ENCODE measurements at regions of chr2 and their contacts with region 1.

Region 1: DNA sequence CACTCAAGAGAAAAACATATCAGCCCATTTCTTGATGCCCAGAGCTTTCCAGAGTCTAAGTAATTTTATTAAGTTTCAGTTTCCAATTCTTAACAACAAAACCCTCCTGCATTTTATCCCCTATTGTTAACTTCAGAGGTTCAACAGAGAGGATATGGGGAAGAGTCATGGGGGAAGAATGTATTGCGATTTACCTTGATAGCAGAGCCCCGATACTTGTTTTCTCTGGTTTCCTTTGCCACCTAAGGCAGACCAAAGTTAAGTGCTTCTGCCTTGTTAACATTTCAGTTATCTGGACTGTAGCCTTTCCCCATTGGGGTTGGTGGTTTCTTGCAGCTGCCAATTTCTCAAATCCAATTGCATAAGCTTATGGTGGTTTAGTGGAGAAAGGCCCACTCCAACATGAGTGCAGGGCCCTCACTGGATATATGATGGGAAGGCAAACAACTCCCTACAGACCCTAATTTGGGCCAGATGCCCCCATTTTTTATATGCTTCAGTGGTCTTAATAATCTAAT is 82.0 kb upstream of the ITGB6 start:
- DNase-seq: no peak
- H3K4me3 ChIP-seq: no peak overlapping the region
- H3K4me3 Mint-ChIP-seq: no peak overlapping the region
- H3K27ac ChIP-seq: no peak overlapping the region
- H3K27ac Mint-ChIP-seq: peak overlapping the region in 5 of 7 donors; percentile 6 to 66 (median 61)
- H3K4me1 ChIP-seq: peaks cover 14% of the 10 kb centered on the region
- H3K4me1 Mint-ChIP-seq: peaks cover 15 to 49% (median 29%) of the 10 kb centered on the region in 4 donors
- H3K27me3 ChIP-seq: no peaks in the 10 kb centered on the region
- H3K27me3 Mint-ChIP-seq: no peaks in the 10 kb centered on the region

Region 2: GRCh38 chr2:159744363-159744762 is 537.8 kb before region 1 on chr2:
- CTCF ChIA-PET with region 1: no interaction called
- POLR2A ChIA-PET with region 1: no interaction called
- intact Hi-C with region 1: no loop called
- DNase-seq: no peak
- H3K4me3 ChIP-seq: no peak overlapping the region
- H3K4me3 Mint-ChIP-seq: no peak overlapping the region
- H3K27ac ChIP-seq: no peak overlapping the region
- H3K27ac Mint-ChIP-seq: peak overlapping the region in 1 of 7 donors; percentile 57
- H3K4me1 ChIP-seq: peaks cover 11% of the 10 kb centered on the region
- H3K4me1 Mint-ChIP-seq: peaks cover 18 to 26% (median 21%) of the 10 kb centered on the region in 4 donors
- H3K27me3 ChIP-seq: no peaks in the 10 kb centered on the region
- H3K27me3 Mint-ChIP-seq: no peaks in the 10 kb centered on the region

Region 3: DNA sequence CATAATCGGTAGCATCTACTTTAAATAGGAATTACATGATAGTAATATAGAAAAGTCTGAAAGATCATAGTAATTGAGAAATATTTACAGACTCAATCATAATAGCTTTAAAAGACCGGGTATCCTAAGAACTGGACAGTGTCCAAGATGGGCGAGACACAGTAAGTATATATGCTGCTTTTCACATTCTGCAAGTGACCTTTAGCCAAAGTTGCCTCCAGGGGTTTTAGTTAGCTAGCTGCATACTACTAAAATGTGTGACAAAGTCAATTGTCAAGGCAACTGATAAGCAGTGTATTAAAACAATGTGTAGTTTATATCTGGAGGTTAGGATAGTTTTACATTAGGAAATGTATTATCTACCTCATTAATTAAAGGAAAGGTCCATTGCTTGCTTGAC is 508.7 kb before region 1 on chr2:
- CTCF ChIA-PET with region 1: no interaction called
- POLR2A ChIA-PET with region 1: no interaction called
- intact Hi-C with region 1: no loop called
- DNase-seq: no peak
- H3K4me3 ChIP-seq: no peak overlapping the region
- H3K4me3 Mint-ChIP-seq: no peak overlapping the region
- H3K27ac ChIP-seq: no peak overlapping the region
- H3K27ac Mint-ChIP-seq: no peak overlapping the region
- H3K4me1 ChIP-seq: no peaks in the 10 kb centered on the region
- H3K4me1 Mint-ChIP-seq: no peaks in the 10 kb centered on the region
- H3K27me3 ChIP-seq: no peaks in the 10 kb centered on the region
- H3K27me3 Mint-ChIP-seq: no peaks in the 10 kb centered on the region

Region 4: DNA sequence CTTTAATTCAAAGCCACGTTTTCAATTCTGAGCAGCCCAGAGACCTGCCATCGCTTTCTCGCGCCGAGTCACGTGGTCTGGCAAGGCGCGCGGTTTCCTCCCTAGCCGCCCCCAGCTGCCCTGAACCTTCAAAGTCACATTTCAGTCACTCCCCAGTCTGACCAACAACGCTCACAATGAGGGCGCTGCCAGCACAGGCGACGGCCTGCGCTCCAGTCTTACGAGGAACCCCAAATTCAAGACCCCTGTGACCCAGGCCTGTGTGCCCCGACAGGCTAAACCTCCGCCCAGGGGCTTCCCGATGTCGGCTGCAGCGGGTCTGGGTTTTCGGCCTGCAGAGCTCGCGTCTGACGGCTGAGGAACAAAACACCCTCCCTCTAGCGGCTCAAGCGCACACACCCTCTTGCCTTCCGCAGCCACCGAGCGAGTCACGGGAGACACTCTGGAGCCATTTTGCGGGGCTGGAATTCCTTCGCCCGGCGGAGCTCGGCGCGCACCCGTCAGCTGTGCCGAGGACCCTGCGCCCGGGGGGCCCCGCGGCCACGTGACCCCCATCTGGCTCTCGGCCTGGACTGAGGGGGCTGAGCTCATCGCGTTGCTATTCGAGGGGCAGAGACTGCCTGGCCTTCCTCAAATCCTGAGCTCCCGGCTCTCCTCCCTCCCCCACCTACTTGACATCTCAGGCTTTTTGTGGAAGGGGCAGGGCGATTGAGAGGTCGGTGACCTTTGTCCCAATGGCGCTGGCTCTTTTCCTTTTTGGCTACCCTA is 12.1 kb before region 1 on chr2:
- CTCF ChIA-PET with region 1: interaction called, 10 read pairs
- POLR2A ChIA-PET with region 1: interaction called, 7 read pairs
- intact Hi-C with region 1: no loop called
- DNase-seq: peak; percentile 64 to 75 (median 69)
- H3K4me3 ChIP-seq: peak overlapping the region; percentile 30 to 59
- H3K4me3 Mint-ChIP-seq: peak overlapping the region; percentile 81 to 90 (median 87)
- H3K27ac ChIP-seq: peak overlapping the region; percentile 64
- H3K27ac Mint-ChIP-seq: peak overlapping the region; percentile 91 to 97 (median 94)
- H3K4me1 ChIP-seq: peaks cover 29% of the 10 kb centered on the region
- H3K4me1 Mint-ChIP-seq: peaks cover 20 to 48% (median 32%) of the 10 kb centered on the region in 4 donors
- H3K27me3 ChIP-seq: no peaks in the 10 kb centered on the region
- H3K27me3 Mint-ChIP-seq: no peaks in the 10 kb centered on the region

Region 5: GRCh38 chr2:160703648-160704585 is 421.8 kb after region 1 on chr2:
- CTCF ChIA-PET with region 1: no interaction called
- POLR2A ChIA-PET with region 1: no interaction called
- intact Hi-C with region 1: no loop called
- DNase-seq: peak in 4 of 5 donors; percentile 15 to 28 (median 19)
- H3K4me3 ChIP-seq: no peak overlapping the region
- H3K4me3 Mint-ChIP-seq: peak overlapping the region in 5 of 8 donors; percentile 22 to 77 (median 40)
- H3K27ac ChIP-seq: no peak overlapping the region
- H3K27ac Mint-ChIP-seq: peak overlapping the region in 3 of 7 donors; percentile 35 to 70 (median 43)
- H3K4me1 ChIP-seq: peaks cover 10% of the 10 kb centered on the region
- H3K4me1 Mint-ChIP-seq: peaks cover 9 to 14% (median 9%) of the 10 kb centered on the region in 4 donors
- H3K27me3 ChIP-seq: no peaks in the 10 kb centered on the region
- H3K27me3 Mint-ChIP-seq: peaks cover 2 to 3% of the 10 kb centered on the region in 2 donors